Heart left ventricle (tissue), 16 donors: ENCODE measurements at regions of chr10 and their contacts with region 1.

Region 1: DNA sequence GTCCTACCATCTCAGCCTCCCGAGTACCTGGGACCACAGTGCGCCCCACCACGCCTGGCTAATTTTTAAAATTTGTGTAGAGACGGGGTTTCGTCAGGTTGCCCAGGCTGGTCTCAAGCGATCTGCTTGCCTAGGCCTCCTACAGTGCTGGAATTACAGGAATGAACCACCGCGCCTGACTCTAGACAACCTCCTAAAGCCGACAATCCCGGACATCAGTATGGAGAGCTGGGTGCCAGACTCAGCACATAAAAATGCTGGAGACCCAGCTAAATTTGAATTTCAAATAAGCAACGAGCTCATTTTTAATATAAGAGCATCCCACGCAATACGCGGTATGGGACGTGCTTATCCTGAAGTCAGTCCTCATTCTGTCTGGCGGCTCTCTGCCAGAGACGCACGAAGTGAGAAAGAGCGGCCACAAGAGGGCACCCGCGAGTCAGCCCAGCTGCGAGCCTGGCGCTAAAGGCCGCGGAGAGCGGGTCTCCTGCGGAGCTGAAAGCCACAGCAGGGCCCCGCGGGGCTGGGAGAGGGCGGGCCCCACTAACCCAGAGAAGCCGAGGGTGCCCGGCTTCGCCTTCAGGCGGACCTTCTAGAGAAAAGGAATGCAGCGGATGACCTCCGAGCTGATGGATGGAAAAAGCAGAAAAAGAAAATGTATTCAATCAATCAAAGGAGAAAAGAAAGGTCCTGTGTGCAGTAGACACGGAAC is 7.0 kb downstream of the CALY start:
- DNase-seq: peak; percentile 78 to 93 (median 87)
- ATAC-seq: peak; percentile 71 to 86 (median 82)
- H3K4me3 ChIP-seq: peak overlapping the region in 9 of 12 donors; percentile 18 to 37 (median 30)
- H3K27ac ChIP-seq: no peak overlapping the region
- H3K4me1 ChIP-seq: peaks cover 0 to 25% (median 14%) of the 10 kb centered on the region in 12 donors
- H3K27me3 ChIP-seq: peaks cover 46 to 81% (median 68%) of the 10 kb centered on the region in 9 donors
- CTCF ChIP-seq: peak; percentile 89 to 99 (median 97)
- POLR2A ChIP-seq: no peak

Region 2: GRCh38 chr10:132722394-132723329 is 607.0 kb before region 1 on chr10:
- intact Hi-C with region 1: no loop called
- DNase-seq: peak in 4 of 5 donors; percentile 50 to 63 (median 55)
- ATAC-seq: peak; percentile 70 to 98 (median 82)
- H3K4me3 ChIP-seq: peak overlapping the region in 4 of 12 donors; percentile 5 to 17 (median 10)
- H3K27ac ChIP-seq: peak overlapping the region in 8 of 12 donors; percentile 6 to 39 (median 23)
- H3K4me1 ChIP-seq: peaks cover 0 to 9% (median 0%) of the 10 kb centered on the region in 12 donors
- H3K27me3 ChIP-seq: no peaks in the 10 kb centered on the region
- CTCF ChIP-seq: peak in 7 of 12 donors; percentile 7 to 33 (median 15)
- POLR2A ChIP-seq: no peak

Region 3: GRCh38 chr10:133287832-133288500 is 41.7 kb before region 1 on chr10:
- intact Hi-C with region 1: no loop called
- DNase-seq: no peak
- ATAC-seq: peak in 2 of 4 donors; percentile 29 to 39
- H3K4me3 ChIP-seq: no peak overlapping the region
- H3K27ac ChIP-seq: no peak overlapping the region
- H3K4me1 ChIP-seq: peaks cover 0 to 6% (median 0%) of the 10 kb centered on the region in 12 donors
- H3K27me3 ChIP-seq: no peaks in the 10 kb centered on the region
- CTCF ChIP-seq: no peak
- POLR2A ChIP-seq: no peak

Region 4: DNA sequence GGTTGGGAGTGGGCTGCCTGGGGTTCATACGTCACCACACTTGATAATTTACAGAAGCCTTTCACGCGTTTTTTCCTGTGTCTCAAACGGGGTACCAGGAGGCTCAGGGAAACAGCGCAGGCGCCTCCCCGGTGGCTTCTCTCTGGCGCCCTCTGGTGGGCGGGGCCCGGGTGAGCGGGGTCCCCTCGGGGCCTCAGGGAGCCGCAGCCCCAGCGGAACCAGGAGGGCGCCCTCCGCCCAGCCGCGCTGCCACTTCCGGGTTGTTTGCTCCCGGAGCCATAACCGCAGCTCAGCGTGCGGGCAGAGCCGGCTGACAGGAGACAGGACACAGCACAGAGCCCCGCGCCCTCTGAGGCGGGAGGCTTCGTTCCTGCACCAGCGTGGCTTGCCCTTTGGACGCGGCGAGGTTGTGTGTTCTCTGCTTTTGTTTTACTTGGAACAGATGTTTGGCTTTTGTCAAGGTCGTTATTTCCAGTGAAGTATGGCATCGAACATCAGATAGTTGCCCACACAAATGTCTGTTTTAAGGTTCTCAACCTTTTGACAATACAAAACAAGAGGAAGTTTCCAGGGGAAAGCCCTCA is 190.6 kb after region 1 on chr10:
- intact Hi-C with region 1: loop called (anchors 1 to 10 kb)
- DNase-seq: peak; percentile 63 to 92 (median 82)
- ATAC-seq: peak; percentile 75 to 99 (median 94)
- H3K4me3 ChIP-seq: peak overlapping the region; percentile 17 to 59 (median 42)
- H3K27ac ChIP-seq: no peak overlapping the region
- H3K4me1 ChIP-seq: peaks cover 0 to 12% (median 5%) of the 10 kb centered on the region in 12 donors
- H3K27me3 ChIP-seq: peaks cover 0 to 4% (median 0%) of the 10 kb centered on the region in 9 donors
- CTCF ChIP-seq: peak; percentile 78 to 94 (median 88)
- POLR2A ChIP-seq: no peak

Region 5: DNA sequence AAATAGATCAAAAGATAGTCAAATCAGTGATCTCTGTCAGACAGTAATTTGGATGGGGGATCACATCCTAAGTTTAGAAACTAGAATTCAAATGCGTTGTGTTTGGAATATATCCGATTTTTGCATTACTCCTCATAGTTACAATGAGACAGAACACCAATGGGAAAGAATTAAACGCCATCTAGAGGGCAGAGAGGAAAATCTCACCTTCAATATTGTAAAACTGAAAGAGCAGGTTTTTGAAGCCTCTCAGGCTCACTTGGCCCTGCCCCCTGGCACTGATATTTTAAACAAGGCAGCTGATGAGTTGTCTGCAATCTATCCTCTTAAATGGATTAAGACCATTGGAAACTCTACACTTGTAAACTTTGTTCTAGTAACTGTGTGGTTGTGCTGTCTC is 279.2 kb after region 1 on chr10:
- intact Hi-C with region 1: loop called in 3 of 10 experiments (anchors 1 to 5 kb)
- DNase-seq: no peak
- ATAC-seq: no peak
- H3K4me3 ChIP-seq: no peak overlapping the region
- H3K27ac ChIP-seq: no peak overlapping the region
- H3K4me1 ChIP-seq: no peaks in the 10 kb centered on the region
- H3K27me3 ChIP-seq: peaks cover 0 to 57% (median 19%) of the 10 kb centered on the region in 9 donors
- CTCF ChIP-seq: peak in 11 of 12 donors; percentile 18 to 62 (median 53)
- POLR2A ChIP-seq: no peak